ENCODE measurements at regions of chr2 and their contacts with region 1.

Region 1: DNA sequence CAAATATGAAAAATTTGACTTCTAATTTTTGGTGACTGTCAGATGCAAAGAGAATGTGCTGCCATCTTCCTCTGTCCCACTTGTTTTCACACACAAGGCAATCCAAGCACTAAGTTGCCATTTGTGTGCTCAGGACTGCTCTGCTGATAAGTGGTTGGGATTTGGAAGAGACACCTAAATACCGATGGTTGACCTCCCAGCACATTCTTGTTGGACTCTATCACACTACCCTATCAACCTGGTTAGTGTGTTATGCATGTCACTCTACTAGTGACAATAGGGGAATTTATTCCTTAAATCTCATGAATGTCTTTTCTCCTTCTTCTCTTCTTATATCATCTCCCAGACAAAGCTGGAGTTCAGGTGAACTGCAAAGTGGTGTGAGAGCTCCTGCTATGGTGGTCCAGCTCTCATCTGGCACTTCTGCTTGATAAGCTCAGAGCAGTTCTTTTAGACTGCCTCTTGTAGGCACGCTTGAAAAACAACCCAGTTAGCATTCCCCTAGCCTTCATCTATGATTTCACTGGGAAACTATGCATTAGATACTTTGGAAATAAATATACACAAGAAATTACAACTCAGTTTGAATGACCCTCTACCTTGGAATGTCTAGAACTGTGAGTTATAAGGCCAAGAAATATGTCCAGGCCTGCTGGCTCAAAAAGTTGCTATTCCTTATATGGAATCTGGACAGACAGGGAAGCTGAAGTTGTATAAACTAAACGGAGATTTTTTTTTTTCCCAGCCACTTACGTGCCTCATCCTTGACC is 404.8 kb downstream of the MEIS1 start:
- DNase-seq: peak; percentile 95
- H3K4me3 ChIP-seq: no peak overlapping the region
- H3K27ac ChIP-seq: peak overlapping the region; percentile 76
- H3K4me1 ChIP-seq: peaks cover 25% of the 10 kb centered on the region
- H3K27me3 ChIP-seq: no peaks in the 10 kb centered on the region
- CTCF ChIP-seq: no peak

Region 2: GRCh38 chr2:66862886-66863650 is 23.3 kb after region 1 on chr2:
- CTCF ChIA-PET with region 1: no interaction called
- dilution Hi-C with region 1: no loop called
- in situ Hi-C with region 1: no loop called
- intact Hi-C with region 1: loop called (anchors 2 kb)
- DNase-seq: peak; percentile 46
- H3K4me3 ChIP-seq: no peak overlapping the region
- H3K27ac ChIP-seq: no peak overlapping the region
- H3K4me1 ChIP-seq: no peaks in the 10 kb centered on the region
- H3K27me3 ChIP-seq: no peaks in the 10 kb centered on the region
- CTCF ChIP-seq: no peak

Region 3: DNA sequence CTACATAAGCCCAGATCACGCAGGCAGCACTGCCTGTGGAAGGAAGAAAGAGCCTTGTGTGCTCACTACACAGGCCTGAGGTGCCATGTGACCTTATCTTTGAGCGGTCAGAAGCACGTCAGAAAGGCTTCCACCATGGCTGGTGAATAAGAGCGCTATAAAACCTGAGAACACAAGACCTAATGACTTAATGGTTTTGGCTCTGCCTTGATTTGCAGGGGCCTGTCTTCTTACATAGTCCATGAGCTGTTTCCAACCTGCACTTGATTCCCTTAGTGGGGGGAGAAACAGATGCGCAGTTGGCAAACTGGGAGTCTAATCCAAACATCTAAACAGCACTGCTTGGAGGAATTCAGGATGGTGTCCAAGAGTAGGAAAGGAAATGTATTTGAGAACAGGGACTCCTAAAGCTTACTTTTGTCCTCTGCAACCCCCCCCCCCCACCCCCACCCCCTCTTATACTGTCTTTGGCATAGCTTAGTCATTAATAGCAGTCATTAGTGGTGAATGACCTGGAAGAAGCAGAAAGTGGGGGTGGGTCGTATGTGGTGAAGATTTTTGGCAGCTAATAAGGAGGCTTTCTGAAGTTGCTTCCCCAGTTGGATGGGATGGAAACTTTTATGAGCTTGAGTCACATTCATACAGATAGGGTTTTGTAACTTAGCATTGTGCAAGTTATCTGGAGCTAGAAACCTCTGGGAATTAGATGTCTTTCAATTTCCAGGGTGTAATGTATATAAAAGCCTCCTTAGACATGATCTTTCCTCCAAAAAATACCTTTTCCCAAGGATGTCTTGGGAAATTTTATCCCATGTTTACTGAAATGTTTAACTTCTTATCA is 49.3 kb after region 1 on chr2:
- CTCF ChIA-PET with region 1: no interaction called
- dilution Hi-C with region 1: no loop called
- in situ Hi-C with region 1: no loop called
- intact Hi-C with region 1: loop called (anchors 1 kb)
- DNase-seq: peak; percentile 86
- H3K4me3 ChIP-seq: no peak overlapping the region
- H3K27ac ChIP-seq: peak overlapping the region; percentile 30
- H3K4me1 ChIP-seq: peaks cover 11% of the 10 kb centered on the region
- H3K27me3 ChIP-seq: no peaks in the 10 kb centered on the region
- CTCF ChIP-seq: no peak

Region 4: DNA sequence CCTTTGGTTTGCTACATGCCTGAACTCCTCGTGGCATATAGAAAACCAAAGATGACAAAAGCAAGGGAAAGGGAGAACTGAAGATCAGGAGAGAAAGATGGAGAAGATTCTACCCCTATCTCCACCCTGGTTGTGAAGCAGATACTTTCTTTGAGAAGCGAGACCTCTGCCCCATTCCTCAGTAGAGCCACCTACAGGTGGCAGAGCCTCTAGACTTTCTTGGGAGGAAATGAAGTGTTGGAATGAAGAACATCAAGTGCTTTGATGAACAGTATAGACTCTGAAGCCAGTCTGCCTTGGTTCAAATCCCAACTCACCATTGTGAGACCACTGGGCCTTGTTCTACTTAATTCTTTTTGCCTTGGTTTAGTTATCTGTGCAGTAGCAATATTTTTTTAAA is 208.6 kb after region 1 on chr2:
- CTCF ChIA-PET with region 1: no interaction called
- dilution Hi-C with region 1: no loop called
- in situ Hi-C with region 1: no loop called
- intact Hi-C with region 1: no loop called
- DNase-seq: no peak
- H3K4me3 ChIP-seq: no peak overlapping the region
- H3K27ac ChIP-seq: no peak overlapping the region
- H3K4me1 ChIP-seq: no peaks in the 10 kb centered on the region
- H3K27me3 ChIP-seq: no peaks in the 10 kb centered on the region
- CTCF ChIP-seq: peak in 1 of 2 donors; percentile 22